ENCODE measurements at regions of chr17 and their contacts with region 1.

Region 1: GRCh38 chr17:75749545-75750389 is 15.2 kb downstream of the GALK1 start:
- DNase-seq: peak; percentile 65 to 92 (median 82)
- ATAC-seq: peak; percentile 84
- H3K4me3 ChIP-seq: no peak overlapping the region
- H3K4me3 Mint-ChIP-seq: peak overlapping the region in 2 of 10 donors; percentile 25 to 44
- H3K27ac ChIP-seq: no peak overlapping the region
- H3K27ac Mint-ChIP-seq: peak overlapping the region in 2 of 9 donors; percentile 21 to 55
- H3K4me1 ChIP-seq: peaks cover 5 to 14% of the 10 kb centered on the region in 2 donors
- H3K4me1 Mint-ChIP-seq: peaks cover 9 to 21% (median 14%) of the 10 kb centered on the region in 7 donors
- H3K27me3 ChIP-seq: no peaks in the 10 kb centered on the region
- H3K27me3 Mint-ChIP-seq: peaks cover 0 to 5% (median 0%) of the 10 kb centered on the region in 5 donors

Region 2: DNA sequence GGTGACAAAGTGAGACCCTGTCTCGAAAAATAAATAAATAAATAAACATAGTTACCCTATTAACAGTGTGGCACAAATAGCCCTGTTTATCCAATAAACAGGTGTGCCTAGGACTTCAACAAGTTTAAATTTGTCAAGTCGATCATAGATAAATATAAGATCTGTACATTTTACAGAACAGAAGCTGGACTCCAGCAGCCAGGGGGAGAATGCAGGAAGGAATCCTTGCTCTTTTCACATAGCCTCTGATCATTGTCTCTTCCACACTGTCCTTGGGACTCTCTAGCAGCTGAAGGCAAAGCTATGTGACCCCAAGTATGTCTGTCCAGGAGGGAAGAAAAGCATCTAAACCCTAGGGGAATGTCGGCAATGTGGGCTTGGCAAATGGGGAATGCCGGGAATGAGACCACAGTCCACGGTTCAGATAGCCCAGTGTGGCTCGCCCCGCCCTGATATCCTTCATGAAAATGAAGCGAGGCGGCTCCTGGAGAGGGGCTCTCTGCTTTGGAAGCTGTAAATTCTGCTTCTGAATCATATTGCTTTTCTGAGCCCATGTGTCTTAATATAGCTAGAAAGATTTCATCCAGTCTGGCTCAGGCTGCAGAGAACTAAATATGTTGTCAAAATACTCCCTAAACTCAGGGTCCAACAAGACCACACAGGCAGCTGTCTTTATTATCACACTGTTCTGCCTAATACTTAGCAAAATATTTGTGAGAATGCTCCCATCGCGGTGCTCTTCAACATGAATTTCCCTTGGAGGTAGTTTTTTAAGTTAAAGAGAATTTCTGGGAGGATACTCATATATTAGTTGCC is 319.4 kb before region 1 on chr17:
- CTCF ChIA-PET with region 1: interaction called, 4 read pairs
- POLR2A ChIA-PET with region 1: interaction called, 3 read pairs
- intact Hi-C with region 1: loop called in 1 of 2 experiments (anchors 1 kb)
- DNase-seq: no peak
- ATAC-seq: no peak
- H3K4me3 ChIP-seq: no peak overlapping the region
- H3K4me3 Mint-ChIP-seq: no peak overlapping the region
- H3K27ac ChIP-seq: no peak overlapping the region
- H3K27ac Mint-ChIP-seq: no peak overlapping the region
- H3K4me1 ChIP-seq: peaks cover 0 to 6% of the 10 kb centered on the region in 2 donors
- H3K4me1 Mint-ChIP-seq: peaks cover 6 to 17% (median 9%) of the 10 kb centered on the region in 7 donors
- H3K27me3 ChIP-seq: no peaks in the 10 kb centered on the region
- H3K27me3 Mint-ChIP-seq: peaks cover 0 to 38% (median 4%) of the 10 kb centered on the region in 5 donors

Region 3: GRCh38 chr17:75595277-75595918 is 154.4 kb before region 1 on chr17:
- CTCF ChIA-PET with region 1: no interaction called
- POLR2A ChIA-PET with region 1: no interaction called
- intact Hi-C with region 1: no loop called
- DNase-seq: no peak
- ATAC-seq: no peak
- H3K4me3 ChIP-seq: no peak overlapping the region
- H3K4me3 Mint-ChIP-seq: no peak overlapping the region
- H3K27ac ChIP-seq: no peak overlapping the region
- H3K27ac Mint-ChIP-seq: no peak overlapping the region
- H3K4me1 ChIP-seq: no peaks in the 10 kb centered on the region
- H3K4me1 Mint-ChIP-seq: peaks cover 0 to 8% (median 5%) of the 10 kb centered on the region in 7 donors
- H3K27me3 ChIP-seq: no peaks in the 10 kb centered on the region
- H3K27me3 Mint-ChIP-seq: no peaks in the 10 kb centered on the region

Region 4: DNA sequence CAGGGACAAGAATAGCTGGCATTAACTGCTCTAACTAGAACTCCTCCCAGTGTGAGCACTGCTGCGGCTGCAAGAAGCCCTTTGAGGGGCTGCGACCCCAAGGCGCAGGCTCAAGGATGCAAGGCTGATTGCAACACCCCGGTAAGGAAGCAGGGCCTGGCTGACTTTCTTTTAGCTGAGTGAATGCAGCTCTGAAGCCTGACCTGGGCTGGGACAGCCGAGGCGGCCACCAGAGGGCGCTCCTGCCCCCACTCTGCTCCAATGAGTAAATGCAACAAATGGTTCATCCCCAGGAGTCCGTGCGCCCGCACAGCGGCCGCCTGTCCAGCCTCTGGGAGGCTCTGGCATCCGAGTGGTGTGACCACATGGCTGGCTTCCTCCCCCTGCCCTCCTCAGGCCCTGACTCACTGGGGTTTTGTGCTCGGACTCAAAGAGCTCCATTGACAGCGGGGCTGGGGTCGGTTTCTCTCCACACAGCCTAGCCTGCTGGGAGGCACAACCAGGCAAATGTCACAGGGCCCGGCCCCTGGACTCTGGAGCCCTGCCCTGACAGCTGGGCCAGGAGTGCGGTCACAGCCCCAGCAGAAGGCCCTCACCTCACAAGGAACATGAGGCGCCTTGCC is 116.8 kb before region 1 on chr17 and contains the start of gene SMIM5:
- CTCF ChIA-PET with region 1: interaction called, 106 read pairs
- POLR2A ChIA-PET with region 1: interaction called, 3 read pairs
- intact Hi-C with region 1: loop called (anchors 1 kb)
- DNase-seq: peak; percentile 62 to 85 (median 80)
- ATAC-seq: peak; percentile 93
- H3K4me3 ChIP-seq: no peak within 1 kb of the TSS
- H3K4me3 Mint-ChIP-seq: peak within 1 kb of the TSS in 2 of 10 donors; percentile 19 to 21
- H3K27ac ChIP-seq: no peak within 1 kb of the TSS
- H3K27ac Mint-ChIP-seq: peak within 1 kb of the TSS in 3 of 9 donors; percentile 12 to 43 (median 35)
- H3K4me1 ChIP-seq: peaks cover 0 to 8% of the 10 kb centered on the region in 2 donors
- H3K4me1 Mint-ChIP-seq: peaks cover 3 to 14% (median 7%) of the 10 kb centered on the region in 7 donors
- H3K27me3 ChIP-seq: no peaks in the 10 kb centered on the region
- H3K27me3 Mint-ChIP-seq: no peaks in the 10 kb centered on the region
- total RNA-seq, gene SMIM5: 0.43 to 2.4 (median 0.84) TPM

Region 5: DNA sequence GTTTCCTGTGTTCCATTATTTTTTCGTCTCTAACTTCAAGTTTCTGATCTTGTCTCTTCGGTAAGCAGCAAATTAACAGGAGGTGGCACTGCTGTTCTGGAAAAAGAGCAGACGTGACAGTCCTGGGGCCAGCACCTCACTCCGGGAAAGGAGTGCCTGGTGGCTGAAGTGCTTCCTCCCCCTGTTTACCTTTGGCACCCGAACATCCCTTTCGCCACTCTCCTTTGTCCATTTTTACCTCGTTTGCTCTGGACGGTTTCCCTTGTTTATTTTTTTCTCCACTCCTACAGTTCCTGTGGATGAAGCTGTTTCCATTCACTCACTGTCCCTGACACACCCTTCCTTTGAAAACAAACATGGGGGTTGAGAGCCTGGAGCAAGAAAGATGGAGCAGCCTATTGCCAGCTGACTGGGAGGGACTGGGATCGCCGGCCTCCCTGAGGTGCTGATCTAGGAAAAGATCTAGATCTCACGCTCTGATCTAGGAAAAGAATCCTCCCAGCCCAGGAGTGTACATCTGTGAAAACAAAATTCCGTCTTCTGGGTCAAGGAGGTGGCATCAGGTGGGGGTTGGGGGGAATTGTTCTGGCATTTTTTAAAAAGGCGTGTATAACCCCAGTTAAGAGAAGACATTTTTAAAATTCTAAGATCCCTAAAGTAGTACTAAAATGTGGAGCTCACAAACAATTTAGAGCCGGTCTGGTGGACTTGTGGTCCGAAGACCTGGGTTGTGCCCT is 69.9 kb before region 1 on chr17:
- CTCF ChIA-PET with region 1: interaction called, 97 read pairs
- POLR2A ChIA-PET with region 1: no interaction called
- intact Hi-C with region 1: loop called (anchors 1 kb)
- DNase-seq: no peak
- ATAC-seq: no peak
- H3K4me3 ChIP-seq: no peak overlapping the region
- H3K4me3 Mint-ChIP-seq: no peak overlapping the region
- H3K27ac ChIP-seq: no peak overlapping the region
- H3K27ac Mint-ChIP-seq: no peak overlapping the region
- H3K4me1 ChIP-seq: no peaks in the 10 kb centered on the region
- H3K4me1 Mint-ChIP-seq: peaks cover 0 to 26% (median 19%) of the 10 kb centered on the region in 7 donors
- H3K27me3 ChIP-seq: no peaks in the 10 kb centered on the region
- H3K27me3 Mint-ChIP-seq: no peaks in the 10 kb centered on the region

Region 6: DNA sequence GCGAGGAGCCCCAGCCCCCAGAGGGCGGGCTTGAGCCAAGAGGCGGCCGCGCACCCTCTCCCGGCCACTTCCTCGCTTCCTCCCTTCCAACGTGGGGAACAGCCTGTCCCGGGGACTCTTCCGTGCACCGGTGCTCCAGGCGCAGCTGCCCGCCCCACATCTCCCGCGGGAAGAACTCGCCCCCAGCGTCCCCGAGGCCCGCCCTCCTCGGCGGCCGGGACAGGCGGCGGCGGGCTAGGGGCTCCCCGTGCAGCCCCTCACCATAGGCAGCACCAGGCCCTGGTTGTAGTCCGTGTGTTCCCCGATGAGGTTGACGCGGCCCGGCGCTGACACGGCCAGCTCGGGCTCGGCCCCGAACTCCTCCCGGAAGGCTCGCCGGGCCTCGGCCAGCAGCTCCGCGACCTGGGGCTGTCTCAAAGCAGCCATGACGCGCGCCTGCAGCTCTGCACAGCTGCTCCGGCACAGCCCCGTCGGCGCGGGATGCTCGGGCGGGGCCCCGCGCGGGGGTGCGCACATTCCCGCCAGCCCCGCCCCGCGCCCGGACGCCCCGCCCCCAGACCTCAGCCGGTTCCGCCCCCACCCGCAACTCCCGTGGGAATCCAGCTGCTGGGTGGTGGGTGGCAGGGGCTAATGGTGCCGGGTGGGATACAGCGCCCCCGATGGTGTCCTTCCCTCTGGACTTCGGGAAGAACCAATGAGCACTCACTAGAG is 15.1 kb after region 1 on chr17 and contains the start of gene GALK1:
- CTCF ChIA-PET with region 1: interaction called, 21 read pairs
- POLR2A ChIA-PET with region 1: interaction called, 8 read pairs
- intact Hi-C with region 1: loop called in 1 of 2 experiments (anchors 1 kb)
- DNase-seq: peak; percentile 56 to 78 (median 67)
- ATAC-seq: peak; percentile 97
- H3K4me3 ChIP-seq: peak within 1 kb of the TSS; percentile 71
- H3K4me3 Mint-ChIP-seq: peak within 1 kb of the TSS; percentile 62 to 84 (median 75)
- H3K27ac ChIP-seq: peak within 1 kb of the TSS; percentile 67
- H3K27ac Mint-ChIP-seq: peak within 1 kb of the TSS; percentile 32 to 87 (median 70)
- H3K4me1 ChIP-seq: peaks cover 11% of the 10 kb centered on the region in 2 donors
- H3K4me1 Mint-ChIP-seq: peaks cover 0 to 21% (median 10%) of the 10 kb centered on the region in 7 donors
- H3K27me3 ChIP-seq: no peaks in the 10 kb centered on the region
- H3K27me3 Mint-ChIP-seq: no peaks in the 10 kb centered on the region
- total RNA-seq, gene GALK1: 9.9 to 42.9 (median 22.1) TPM

Region 7: DNA sequence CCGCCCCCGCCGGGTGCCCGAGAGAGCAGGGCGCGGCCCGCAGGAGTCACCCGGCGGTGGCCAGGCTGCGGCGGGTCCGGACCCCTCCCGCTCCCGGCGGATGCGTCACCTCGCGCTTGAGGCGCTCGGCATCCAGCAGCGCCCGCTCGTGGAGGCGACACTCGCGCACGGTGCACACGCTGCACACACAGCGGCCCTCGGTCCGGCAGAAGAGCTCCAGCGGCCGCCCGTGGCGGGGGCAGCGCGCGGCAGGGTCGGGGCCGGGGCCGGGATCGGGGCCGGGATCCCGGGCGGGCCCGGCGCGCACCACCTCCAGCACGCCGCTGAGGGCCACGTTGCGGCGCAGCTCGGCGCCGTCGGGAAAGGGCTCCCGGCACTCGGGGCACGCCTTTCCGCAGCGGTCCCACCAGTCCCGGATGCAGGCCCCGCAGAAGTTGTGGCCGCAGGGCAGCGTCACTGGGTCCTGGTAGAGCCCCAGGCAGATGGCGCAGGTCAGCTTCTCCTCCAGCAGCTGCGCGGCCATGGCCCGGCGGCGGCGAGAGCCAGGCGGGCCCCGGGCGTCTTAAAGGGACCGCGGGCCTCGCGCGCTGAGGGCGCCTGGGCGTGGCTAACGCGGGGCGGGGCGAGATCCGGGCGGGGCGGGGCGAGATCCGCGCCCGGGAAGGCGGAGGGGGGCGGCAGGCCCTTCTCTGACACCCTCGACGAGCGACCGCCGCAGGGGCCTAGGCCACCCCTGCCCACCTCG is 146.8 kb after region 1 on chr17 and contains the start of gene TRIM65:
- CTCF ChIA-PET with region 1: interaction called, 4 read pairs
- POLR2A ChIA-PET with region 1: interaction called, 6 read pairs
- intact Hi-C with region 1: loop called in 1 of 2 experiments (anchors 2 kb)
- DNase-seq: peak; percentile 63 to 87 (median 71)
- ATAC-seq: peak; percentile 91
- H3K4me3 ChIP-seq: peak within 1 kb of the TSS; percentile 65
- H3K4me3 Mint-ChIP-seq: peak within 1 kb of the TSS; percentile 55 to 92 (median 84)
- H3K27ac ChIP-seq: peak within 1 kb of the TSS; percentile 75
- H3K27ac Mint-ChIP-seq: peak within 1 kb of the TSS; percentile 66 to 91 (median 85)
- H3K4me1 ChIP-seq: peaks cover 8 to 12% of the 10 kb centered on the region in 2 donors
- H3K4me1 Mint-ChIP-seq: peaks cover 22 to 32% (median 26%) of the 10 kb centered on the region in 7 donors
- H3K27me3 ChIP-seq: no peaks in the 10 kb centered on the region
- H3K27me3 Mint-ChIP-seq: no peaks in the 10 kb centered on the region
- total RNA-seq, gene TRIM65: 20.9 to 37.7 (median 29.6) TPM

Region 8: GRCh38 chr17:76141212-76142038 is 391.7 kb after region 1 on chr17 and contains the start of gene FOXJ1:
- CTCF ChIA-PET with region 1: no interaction called
- POLR2A ChIA-PET with region 1: no interaction called
- intact Hi-C with region 1: no loop called
- DNase-seq: peak; percentile 88 to 94 (median 91)
- ATAC-seq: peak; percentile 87
- H3K4me3 ChIP-seq: peak within 1 kb of the TSS; percentile 49
- H3K4me3 Mint-ChIP-seq: peak within 1 kb of the TSS; percentile 82 to 89 (median 85)
- H3K27ac ChIP-seq: peak within 1 kb of the TSS; percentile 61
- H3K27ac Mint-ChIP-seq: peak within 1 kb of the TSS; percentile 80 to 99 (median 93)
- H3K4me1 ChIP-seq: peaks cover 50 to 58% of the 10 kb centered on the region in 2 donors
- H3K4me1 Mint-ChIP-seq: peaks cover 42 to 63% (median 59%) of the 10 kb centered on the region in 7 donors
- H3K27me3 ChIP-seq: no peaks in the 10 kb centered on the region
- H3K27me3 Mint-ChIP-seq: peaks cover 0 to 26% (median 0%) of the 10 kb centered on the region in 5 donors
- total RNA-seq, gene FOXJ1: 0.29 to 2.2 (median 1.4) TPM